Calu3 (cell line): ENCODE measurements at regions of chr6 and their contacts with region 1.

Region 1: GRCh38 chr6:42075159-42075838 is 25.0 kb downstream of the TAF8 start:
- DNase-seq: peak; percentile 93
- H3K4me3 Mint-ChIP-seq: no peak overlapping the region
- H3K27ac Mint-ChIP-seq: no peak overlapping the region
- H3K4me1 Mint-ChIP-seq: no peaks in the 10 kb centered on the region
- H3K27me3 Mint-ChIP-seq: no peaks in the 10 kb centered on the region
- CTCF ChIP-seq: peak; percentile 87

Region 2: DNA sequence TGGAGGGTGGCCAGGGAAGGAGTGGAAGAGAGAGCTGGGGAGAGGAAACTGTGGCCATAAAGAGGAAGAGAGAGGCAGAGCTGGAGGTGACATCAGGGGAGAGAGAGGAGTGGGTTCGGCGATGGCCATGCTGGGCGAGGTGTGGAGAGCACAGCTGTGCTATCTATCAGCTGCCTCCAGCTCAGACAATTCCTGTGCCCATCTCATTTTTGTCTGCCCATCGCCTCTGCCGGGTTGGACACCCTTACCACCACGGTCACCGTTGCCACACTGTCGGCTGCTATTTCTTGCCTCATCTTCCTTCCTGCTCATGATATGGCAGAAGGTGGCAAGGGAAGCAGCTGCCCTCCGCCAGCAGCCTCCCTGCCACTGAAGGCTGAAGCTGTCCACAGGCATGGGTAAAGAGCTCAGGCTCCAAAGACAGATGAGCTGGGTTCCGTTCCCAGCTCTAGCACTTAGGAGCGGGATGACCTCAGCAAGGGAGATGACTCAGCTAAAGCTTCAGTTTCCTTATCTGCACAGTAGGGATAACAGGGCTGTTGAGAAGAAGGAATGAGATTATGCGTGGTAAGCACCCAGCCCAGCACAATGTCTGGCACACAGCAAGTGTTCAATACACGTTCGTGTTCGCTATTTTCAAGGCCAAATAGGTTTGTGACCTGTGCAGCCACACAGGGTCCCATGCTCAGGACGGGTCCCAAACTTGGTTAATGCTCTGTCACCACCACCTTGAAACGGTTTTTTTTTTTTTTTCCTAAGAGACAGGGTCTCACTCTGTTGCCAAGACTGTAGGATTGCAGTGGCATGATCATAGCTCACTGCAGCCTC is 46.9 kb before region 1 on chr6:
- CTCF ChIA-PET with region 1: no interaction called
- intact Hi-C with region 1: no loop called
- DNase-seq: no peak
- H3K4me3 Mint-ChIP-seq: no peak overlapping the region
- H3K27ac Mint-ChIP-seq: no peak overlapping the region
- H3K4me1 Mint-ChIP-seq: peaks cover 9% of the 10 kb centered on the region
- H3K27me3 Mint-ChIP-seq: no peaks in the 10 kb centered on the region
- CTCF ChIP-seq: no peak

Region 3: GRCh38 chr6:42118162-42119001 is 43.1 kb after region 1 on chr6:
- CTCF ChIA-PET with region 1: no interaction called
- intact Hi-C with region 1: loop called (anchors 2 kb)
- DNase-seq: peak; percentile 94
- H3K4me3 Mint-ChIP-seq: peak overlapping the region; percentile 11
- H3K27ac Mint-ChIP-seq: peak overlapping the region; percentile 90
- H3K4me1 Mint-ChIP-seq: peaks cover 68% of the 10 kb centered on the region
- H3K27me3 Mint-ChIP-seq: no peaks in the 10 kb centered on the region
- CTCF ChIP-seq: no peak

Region 4: GRCh38 chr6:42166444-42167141 is 91.3 kb after region 1 on chr6:
- CTCF ChIA-PET with region 1: interaction called, 5 read pairs
- intact Hi-C with region 1: loop called (anchors 1 kb)
- DNase-seq: peak; percentile 90
- H3K4me3 Mint-ChIP-seq: no peak overlapping the region
- H3K27ac Mint-ChIP-seq: peak overlapping the region; percentile 54
- H3K4me1 Mint-ChIP-seq: peaks cover 11% of the 10 kb centered on the region
- H3K27me3 Mint-ChIP-seq: no peaks in the 10 kb centered on the region
- CTCF ChIP-seq: peak; percentile 94

Region 5: DNA sequence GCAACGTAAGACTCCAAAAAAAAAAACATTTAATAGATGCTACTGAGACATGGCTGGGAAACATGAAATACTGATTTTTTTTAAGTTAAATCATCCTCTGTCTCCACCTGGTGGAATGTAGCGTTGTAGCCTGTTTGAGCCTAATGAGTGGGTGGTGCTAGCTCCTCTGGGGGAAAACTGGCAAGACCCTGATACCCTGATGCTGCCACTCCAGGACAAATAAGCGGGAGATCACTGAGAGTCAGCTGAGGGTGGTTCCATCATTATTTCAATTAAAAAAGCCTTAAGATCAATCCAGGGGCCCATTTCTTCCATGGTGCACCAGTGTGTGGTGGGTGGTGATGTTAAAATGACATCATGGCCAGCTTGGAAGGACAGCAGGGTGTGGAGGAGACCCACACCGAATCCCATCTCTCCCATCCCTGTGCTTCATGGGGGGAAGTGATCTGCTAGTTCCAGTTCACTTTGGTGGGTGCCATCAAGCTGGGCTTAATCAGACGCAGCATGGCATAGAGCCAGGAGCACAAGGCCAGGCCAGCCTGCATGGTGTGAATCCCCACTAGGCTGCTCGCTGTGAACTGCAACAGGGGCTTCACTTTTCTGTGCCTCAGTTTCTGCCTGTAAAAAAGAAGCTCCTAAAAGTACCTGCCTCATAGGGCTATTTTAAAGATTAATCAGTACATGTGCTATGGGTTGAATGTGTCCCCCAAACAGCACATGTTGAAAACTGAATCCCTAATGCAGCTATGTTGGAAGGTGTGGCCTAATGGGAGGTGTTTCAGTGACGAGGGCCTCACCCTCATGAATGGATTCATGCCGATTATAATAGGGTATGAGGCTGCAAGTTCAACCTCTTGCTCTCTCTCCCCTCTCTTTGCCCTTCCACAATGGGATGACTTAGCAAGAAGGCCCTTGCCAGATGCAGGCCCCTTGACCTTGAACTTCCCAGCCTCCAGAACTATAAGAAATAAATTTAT is 155.3 kb after region 1 on chr6:
- CTCF ChIA-PET with region 1: interaction called, 3 read pairs
- intact Hi-C with region 1: loop called (anchors 2 kb)
- DNase-seq: peak; percentile 33
- H3K4me3 Mint-ChIP-seq: no peak overlapping the region
- H3K27ac Mint-ChIP-seq: no peak overlapping the region
- H3K4me1 Mint-ChIP-seq: peaks cover 51% of the 10 kb centered on the region
- H3K27me3 Mint-ChIP-seq: no peaks in the 10 kb centered on the region
- CTCF ChIP-seq: peak; percentile 82

Region 6: GRCh38 chr6:43181942-43182860 is 1106.9 kb after region 1 on chr6 and contains the start of gene CUL9:
- CTCF ChIA-PET with region 1: no interaction called
- intact Hi-C with region 1: no loop called
- DNase-seq: peak; percentile 93
- H3K4me3 Mint-ChIP-seq: peak within 1 kb of the TSS; percentile 77
- H3K27ac Mint-ChIP-seq: peak within 1 kb of the TSS; percentile 76
- H3K4me1 Mint-ChIP-seq: peaks cover 41% of the 10 kb centered on the region
- H3K27me3 Mint-ChIP-seq: no peaks in the 10 kb centered on the region
- CTCF ChIP-seq: no peak
- total RNA-seq, gene CUL9: 73.1 and 82.8 TPM in 2 replicates